ENCODE measurements at regions of chr17 and their contacts with region 1.

Region 1: DNA sequence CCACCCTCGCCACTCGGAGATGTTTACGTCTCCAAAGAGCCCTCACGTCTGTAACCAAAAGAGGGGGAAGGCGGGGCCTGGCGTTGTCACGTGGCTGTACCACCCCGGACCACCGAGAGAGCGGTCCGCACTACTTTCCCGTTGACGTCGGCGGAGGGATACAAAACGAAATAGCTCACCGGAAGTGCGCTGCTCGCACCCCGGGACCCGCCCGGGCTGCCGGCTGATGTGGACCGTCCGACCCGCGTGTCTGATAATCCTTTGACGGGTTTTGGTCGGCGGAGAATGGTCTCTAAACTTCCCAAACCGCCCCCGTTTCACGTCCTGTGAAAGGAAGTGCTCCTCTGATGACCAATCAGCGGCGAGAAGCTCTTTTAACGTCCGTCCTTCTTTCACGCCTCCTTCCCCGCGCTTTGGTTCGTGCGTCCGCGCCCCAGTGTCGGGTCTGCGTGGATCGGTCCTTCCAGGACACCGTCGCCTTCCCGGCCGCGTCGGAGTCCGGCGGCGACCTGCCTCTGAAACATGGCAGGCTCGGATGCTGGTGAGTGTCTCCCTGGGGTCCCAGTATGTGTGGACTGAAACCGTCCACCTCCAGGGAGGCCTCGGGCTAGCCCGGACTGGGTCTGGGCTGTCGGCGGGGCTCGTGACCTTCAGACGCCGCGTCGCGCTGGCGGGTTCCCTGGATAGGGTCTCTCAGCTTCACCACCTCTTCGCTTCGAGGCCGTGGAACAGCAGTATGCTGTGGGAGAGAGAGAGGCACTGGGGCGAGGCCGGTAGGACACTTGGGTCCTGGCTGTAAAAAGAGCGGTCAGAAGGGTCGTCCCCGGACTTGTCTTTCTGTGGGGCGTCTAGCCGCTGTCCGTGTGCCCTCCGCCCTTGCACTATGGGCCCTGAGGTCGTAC is at the start of gene CEP95:
- DNase-seq: peak; percentile 96
- H3K4me3 Mint-ChIP-seq: peak within 1 kb of the TSS; percentile 97
- H3K27ac Mint-ChIP-seq: peak within 1 kb of the TSS; percentile 100
- H3K4me1 Mint-ChIP-seq: peaks cover 48% of the 10 kb centered on the region
- H3K27me3 Mint-ChIP-seq: peaks cover 2% of the 10 kb centered on the region
- total RNA-seq, gene CEP95: 29.9 to 37.8 TPM

Region 2: GRCh38 chr17:63773381-63774140 is 733.3 kb before region 1 on chr17 and contains the start of gene CCDC47:
- CTCF ChIA-PET with region 1: no interaction called
- POLR2A ChIA-PET with region 1: interaction called, 5 read pairs
- intact Hi-C with region 1: loop called (anchors 10 kb)
- DNase-seq: peak; percentile 99
- H3K4me3 Mint-ChIP-seq: peak within 1 kb of the TSS; percentile 95
- H3K27ac Mint-ChIP-seq: peak within 1 kb of the TSS; percentile 100
- H3K4me1 Mint-ChIP-seq: peaks cover 47% of the 10 kb centered on the region
- H3K27me3 Mint-ChIP-seq: no peaks in the 10 kb centered on the region
- total RNA-seq, gene CCDC47: 57.6 to 60.5 TPM

Region 3: GRCh38 chr17:64063766-64064224 is 443.0 kb before region 1 on chr17:
- CTCF ChIA-PET with region 1: no interaction called
- POLR2A ChIA-PET with region 1: interaction called, 3 read pairs
- intact Hi-C with region 1: loop called (anchors 10 kb)
- DNase-seq: peak; percentile 74
- H3K4me3 Mint-ChIP-seq: peak overlapping the region; percentile 64
- H3K27ac Mint-ChIP-seq: peak overlapping the region; percentile 93
- H3K4me1 Mint-ChIP-seq: peaks cover 88% of the 10 kb centered on the region
- H3K27me3 Mint-ChIP-seq: no peaks in the 10 kb centered on the region

Region 4: GRCh38 chr17:64572638-64573154 is 65.9 kb after region 1 on chr17:
- CTCF ChIA-PET with region 1: interaction called, 3 read pairs
- POLR2A ChIA-PET with region 1: interaction called, 18 read pairs
- intact Hi-C with region 1: loop called (anchors 2 kb)
- DNase-seq: no peak
- H3K4me3 Mint-ChIP-seq: no peak overlapping the region
- H3K27ac Mint-ChIP-seq: peak overlapping the region; percentile 83
- H3K4me1 Mint-ChIP-seq: peaks cover 11% of the 10 kb centered on the region
- H3K27me3 Mint-ChIP-seq: no peaks in the 10 kb centered on the region

Region 5: GRCh38 chr17:64653325-64653984 is 146.6 kb after region 1 on chr17:
- CTCF ChIA-PET with region 1: interaction called, 9 read pairs
- POLR2A ChIA-PET with region 1: interaction called, 4 read pairs
- intact Hi-C with region 1: loop called (anchors 1 kb)
- DNase-seq: no peak
- H3K4me3 Mint-ChIP-seq: no peak overlapping the region
- H3K27ac Mint-ChIP-seq: no peak overlapping the region
- H3K4me1 Mint-ChIP-seq: peaks cover 40% of the 10 kb centered on the region
- H3K27me3 Mint-ChIP-seq: no peaks in the 10 kb centered on the region